ENCODE measurements at regions of chr3 and their contacts with region 1.

Region 1: DNA sequence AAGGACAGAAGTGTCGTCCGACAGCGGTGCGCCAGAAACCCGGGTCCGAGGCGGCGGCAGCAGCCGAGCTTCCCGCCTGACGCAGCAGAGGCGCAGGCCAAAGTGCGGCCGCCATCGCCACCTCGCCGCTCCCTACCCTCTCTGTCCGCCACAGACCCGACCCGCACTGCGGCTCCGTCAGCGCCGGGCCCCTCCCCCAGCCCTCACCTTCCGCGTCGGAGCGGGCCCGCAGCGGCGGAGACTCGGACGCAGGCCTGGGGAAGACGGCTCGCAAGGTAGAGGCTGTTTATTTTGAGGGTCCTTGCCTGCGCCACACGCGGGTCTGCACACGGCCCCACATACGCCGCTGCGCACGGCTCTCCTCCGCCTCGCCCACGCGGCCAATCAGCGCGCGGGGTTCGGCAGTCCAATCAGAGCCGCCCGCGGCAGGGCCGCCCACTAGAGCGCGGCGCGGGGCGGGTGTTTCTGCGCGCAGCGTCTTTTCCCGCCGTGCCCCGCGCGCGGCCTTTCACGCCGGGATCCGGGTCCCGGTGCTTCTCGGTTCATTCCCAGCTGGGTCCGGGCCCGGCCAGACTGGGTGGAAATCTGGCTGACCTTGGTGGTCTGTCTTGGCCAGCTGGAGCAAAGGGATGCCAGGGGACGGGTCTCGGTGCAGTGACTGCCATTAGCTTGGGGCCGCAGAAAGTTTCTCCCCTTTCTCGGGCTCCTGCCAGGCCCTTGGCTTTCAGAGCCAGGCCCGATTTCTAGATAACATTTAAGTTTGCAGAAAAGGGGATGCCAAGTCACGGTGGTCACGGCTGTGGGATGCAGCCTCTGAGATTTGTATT is at the start of gene CNBP:
- DNase-seq: peak in 1 of 2 experiments; percentile 91
- H3K4me3 ChIP-seq: peak within 1 kb of the TSS; percentile 77 to 100 (median 98)
- H3K27ac ChIP-seq: peak within 1 kb of the TSS; percentile 99
- H3K4me1 ChIP-seq: peaks cover 0 to 4% (median 0%) of the 10 kb centered on the region in 4 experiments; a peak in 1 of 7 replicates
- H3K27me3 ChIP-seq: no peaks in the 10 kb centered on the region
- CTCF ChIP-seq: no peak; a peak in 1 of 4 replicates
- EP300 ChIP-seq: no peak
- POLR2A ChIP-seq: peak in 1 of 2 experiments; percentile 91; a peak in 2 of 3 replicates
- RAD21 ChIP-seq: no peak
- total RNA-seq, gene CNBP: 351 and 371 TPM in 2 replicates

Region 2: GRCh38 chr3:129045675-129046036 is 138.1 kb before region 1 on chr3:
- CTCF ChIA-PET with region 1: no interaction called
- POLR2A ChIA-PET with region 1: no interaction called
- DNase-seq: no peak
- H3K4me3 ChIP-seq: no peak overlapping the region
- H3K27ac ChIP-seq: no peak overlapping the region
- H3K4me1 ChIP-seq: peaks cover 0 to 5% (median 0%) of the 10 kb centered on the region in 4 experiments; a peak in 2 of 7 replicates
- H3K27me3 ChIP-seq: peaks cover 0 to 4% (median 0%) of the 10 kb centered on the region in 4 experiments; a peak in 3 of 7 replicates
- CTCF ChIP-seq: no peak
- EP300 ChIP-seq: no peak
- POLR2A ChIP-seq: no peak
- RAD21 ChIP-seq: no peak

Region 3: GRCh38 chr3:129058441-129059200 is 125.2 kb before region 1 on chr3:
- CTCF ChIA-PET with region 1: interaction called, 10 read pairs
- POLR2A ChIA-PET with region 1: no interaction called
- DNase-seq: no peak
- H3K4me3 ChIP-seq: no peak overlapping the region
- H3K27ac ChIP-seq: no peak overlapping the region
- H3K4me1 ChIP-seq: no peaks in the 10 kb centered on the region; a peak in 1 of 7 replicates
- H3K27me3 ChIP-seq: no peaks in the 10 kb centered on the region
- CTCF ChIP-seq: no peak
- EP300 ChIP-seq: no peak
- POLR2A ChIP-seq: no peak
- RAD21 ChIP-seq: no peak

Region 4: GRCh38 chr3:129120254-129121004 is 63.4 kb before region 1 on chr3:
- CTCF ChIA-PET with region 1: no interaction called
- POLR2A ChIA-PET with region 1: interaction called, 16 read pairs
- DNase-seq: peak; percentile 62 to 83
- H3K4me3 ChIP-seq: peak overlapping the region; percentile 68 to 82 (median 74)
- H3K27ac ChIP-seq: peak overlapping the region; percentile 86
- H3K4me1 ChIP-seq: peaks cover 12 to 21% (median 16%) of the 10 kb centered on the region in 4 experiments
- H3K27me3 ChIP-seq: no peaks in the 10 kb centered on the region
- CTCF ChIP-seq: peak in 2 of 3 experiments; percentile 7 to 23; a peak in 2 of 4 replicates
- EP300 ChIP-seq: no peak
- POLR2A ChIP-seq: peak; percentile 63 to 77
- RAD21 ChIP-seq: no peak; a peak in 1 of 4 replicates

Region 5: DNA sequence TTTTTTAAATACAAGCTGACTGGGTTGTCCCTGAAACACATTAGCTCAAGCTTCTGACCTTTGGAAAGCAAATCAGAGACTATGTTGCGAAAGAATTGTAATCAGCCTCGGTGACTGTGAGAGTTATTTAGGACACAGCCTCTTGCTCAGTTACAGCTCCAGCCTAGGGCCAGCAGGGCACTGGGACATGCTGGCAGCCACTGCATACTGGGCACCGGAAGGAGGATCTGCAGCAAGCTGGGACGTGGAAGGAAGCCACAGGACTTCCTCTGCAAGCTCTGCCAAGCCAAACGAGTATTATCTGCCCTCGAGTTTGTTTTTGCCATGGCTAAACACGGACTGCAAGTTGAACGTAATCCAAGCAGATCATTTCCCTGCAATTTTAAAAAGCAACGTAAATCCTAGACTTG is 41.2 kb after region 1 on chr3:
- CTCF ChIA-PET with region 1: no interaction called
- POLR2A ChIA-PET with region 1: interaction called, 31 read pairs
- DNase-seq: no peak
- H3K4me3 ChIP-seq: no peak overlapping the region
- H3K27ac ChIP-seq: no peak overlapping the region; the same call in 1 of the 2 replicates
- H3K4me1 ChIP-seq: peaks cover 3 to 12% (median 7%) of the 10 kb centered on the region in 4 experiments
- H3K27me3 ChIP-seq: no peaks in the 10 kb centered on the region; a peak in 1 of 7 replicates
- CTCF ChIP-seq: no peak
- EP300 ChIP-seq: no peak
- POLR2A ChIP-seq: no peak
- RAD21 ChIP-seq: no peak

Region 6: GRCh38 chr3:129233538-129233937 is 49.8 kb after region 1 on chr3:
- CTCF ChIA-PET with region 1: interaction called, 3 read pairs
- POLR2A ChIA-PET with region 1: interaction called, 31 read pairs
- DNase-seq: no peak
- H3K4me3 ChIP-seq: no peak overlapping the region
- H3K27ac ChIP-seq: no peak overlapping the region
- H3K4me1 ChIP-seq: peaks cover 0 to 6% (median 6%) of the 10 kb centered on the region in 4 experiments; a peak in 6 of 7 replicates
- H3K27me3 ChIP-seq: no peaks in the 10 kb centered on the region; a peak in 1 of 7 replicates
- CTCF ChIP-seq: no peak
- EP300 ChIP-seq: no peak
- POLR2A ChIP-seq: no peak
- RAD21 ChIP-seq: no peak

Region 7: GRCh38 chr3:129238945-129239706 is 55.3 kb after region 1 on chr3:
- CTCF ChIA-PET with region 1: interaction called, 6 read pairs
- POLR2A ChIA-PET with region 1: interaction called, 39 read pairs
- DNase-seq: no peak
- H3K4me3 ChIP-seq: no peak overlapping the region
- H3K27ac ChIP-seq: no peak overlapping the region
- H3K4me1 ChIP-seq: peaks cover 0 to 5% (median 1%) of the 10 kb centered on the region in 4 experiments; a peak in 4 of 7 replicates
- H3K27me3 ChIP-seq: no peaks in the 10 kb centered on the region
- CTCF ChIP-seq: no peak
- EP300 ChIP-seq: no peak
- POLR2A ChIP-seq: no peak
- RAD21 ChIP-seq: no peak

Region 8: DNA sequence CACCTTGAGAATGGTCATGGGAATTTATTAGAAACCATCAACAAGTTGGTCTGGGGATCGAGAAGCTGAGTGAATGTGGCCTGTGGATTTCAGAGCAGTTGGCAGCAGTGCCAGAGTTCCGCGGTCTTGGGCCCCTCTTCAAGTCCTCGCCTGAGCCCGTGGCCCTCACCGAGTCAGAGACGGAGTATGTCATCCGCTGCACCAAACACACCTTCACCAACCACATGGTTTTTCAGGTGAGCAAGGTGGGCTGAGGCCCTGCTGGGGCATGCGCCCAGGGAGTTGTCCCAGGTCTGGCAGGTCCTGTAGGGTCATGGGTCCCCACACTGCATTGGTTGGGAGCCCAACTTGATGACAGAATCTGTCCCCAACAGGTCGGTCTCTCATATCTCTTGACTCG is 87.9 kb after region 1 on chr3:
- CTCF ChIA-PET with region 1: no interaction called
- POLR2A ChIA-PET with region 1: no interaction called
- DNase-seq: no peak
- H3K4me3 ChIP-seq: no peak overlapping the region
- H3K27ac ChIP-seq: no peak overlapping the region
- H3K4me1 ChIP-seq: no peaks in the 10 kb centered on the region
- H3K27me3 ChIP-seq: no peaks in the 10 kb centered on the region
- CTCF ChIP-seq: no peak
- EP300 ChIP-seq: no peak
- POLR2A ChIP-seq: no peak
- RAD21 ChIP-seq: no peak

Region 9: DNA sequence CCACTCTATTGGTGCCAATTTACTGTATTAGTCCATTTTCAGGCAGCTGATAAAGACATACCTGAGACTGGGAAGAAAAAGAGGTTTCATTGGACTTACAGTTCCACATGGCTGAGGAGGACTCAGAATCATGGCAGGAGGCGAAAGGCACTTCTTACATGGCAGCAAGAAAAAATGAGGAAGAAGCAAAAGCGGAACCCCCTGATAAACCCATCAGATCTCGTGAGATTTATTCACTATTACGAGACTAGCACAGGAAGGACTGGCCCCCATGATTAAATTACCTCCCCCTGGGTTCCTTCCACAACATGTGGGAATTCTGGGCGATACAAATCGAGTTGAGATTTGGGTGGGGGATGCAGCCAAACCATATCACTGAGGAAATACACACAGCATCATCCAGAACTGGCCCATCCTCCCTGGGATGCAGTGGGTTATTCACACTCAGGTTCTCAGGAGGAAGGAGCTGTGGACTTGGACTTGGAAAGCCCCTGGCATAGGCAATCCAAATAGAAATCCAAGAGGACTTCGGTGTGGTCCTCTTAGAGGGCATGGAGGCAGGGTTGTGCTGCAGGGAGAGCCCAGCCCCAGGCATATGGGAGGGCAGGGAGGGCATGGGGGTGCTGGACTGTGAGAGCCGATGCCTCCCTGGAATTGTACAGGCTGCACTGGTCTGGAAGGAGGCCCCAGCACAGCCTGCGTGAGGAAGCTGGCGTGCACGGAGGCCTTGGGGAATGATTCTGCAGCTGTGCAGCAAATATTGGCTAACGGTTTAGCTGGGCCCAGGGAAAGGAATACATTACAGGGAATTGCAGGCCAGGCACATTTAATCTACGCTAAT is 181.7 kb after region 1 on chr3:
- CTCF ChIA-PET with region 1: no interaction called
- POLR2A ChIA-PET with region 1: no interaction called
- DNase-seq: no peak
- H3K4me3 ChIP-seq: no peak overlapping the region
- H3K27ac ChIP-seq: no peak overlapping the region
- H3K4me1 ChIP-seq: no peaks in the 10 kb centered on the region; a peak in 1 of 7 replicates
- H3K27me3 ChIP-seq: no peaks in the 10 kb centered on the region
- CTCF ChIP-seq: no peak
- EP300 ChIP-seq: no peak
- POLR2A ChIP-seq: no peak
- RAD21 ChIP-seq: no peak

Region 10: DNA sequence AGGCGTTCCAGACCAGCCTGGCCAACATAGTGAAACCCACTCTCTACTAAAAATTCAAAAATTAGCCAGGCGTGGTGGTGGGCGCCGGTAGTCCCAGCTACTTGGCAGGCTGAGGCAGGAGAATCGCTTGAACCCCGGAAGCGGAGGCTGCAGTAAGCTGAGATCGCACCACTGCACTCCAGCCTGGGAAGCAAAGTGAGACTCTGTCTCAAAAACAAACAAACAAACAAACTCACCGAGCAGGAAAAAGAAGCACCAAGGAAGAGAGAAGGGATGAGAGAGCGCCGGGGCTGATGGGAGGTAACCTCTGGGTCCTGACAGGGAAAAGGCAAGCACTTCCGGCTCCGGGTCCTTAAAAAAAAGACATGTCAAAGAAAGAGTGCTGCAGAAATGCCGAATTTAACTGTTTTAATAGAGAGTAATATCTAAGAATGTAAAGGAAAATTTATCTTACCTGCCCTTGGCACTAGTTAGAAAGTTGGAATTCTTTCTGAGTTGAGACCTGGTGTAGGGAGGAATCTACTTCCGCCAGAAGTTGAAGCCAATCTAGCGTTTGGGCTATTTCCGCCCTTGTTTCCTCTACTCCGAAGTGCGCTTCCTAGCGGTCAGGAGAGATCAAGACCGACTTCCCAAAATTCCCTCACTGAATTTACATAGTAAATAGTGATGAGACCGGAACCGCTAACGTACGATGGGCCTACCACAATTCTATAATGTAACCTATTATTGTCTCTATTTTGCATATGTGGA is 215.5 kb after region 1 on chr3:
- CTCF ChIA-PET with region 1: no interaction called
- POLR2A ChIA-PET with region 1: no interaction called
- DNase-seq: peak; percentile 63 to 72
- H3K4me3 ChIP-seq: peak overlapping the region; percentile 61 to 89 (median 83)
- H3K27ac ChIP-seq: peak overlapping the region; percentile 72
- H3K4me1 ChIP-seq: peaks cover 0 to 4% (median 0%) of the 10 kb centered on the region in 4 experiments; a peak in 3 of 7 replicates
- H3K27me3 ChIP-seq: no peaks in the 10 kb centered on the region; a peak in 1 of 7 replicates
- CTCF ChIP-seq: peak; percentile 58 to 85 (median 65)
- EP300 ChIP-seq: no peak
- POLR2A ChIP-seq: no peak
- RAD21 ChIP-seq: peak in 1 of 2 experiments; percentile 37; a peak in 2 of 4 replicates

Measured in H1 (cell line).